Activated CD4-positive, alpha-beta memory T cell treated with anti-CD3 and anti-CD28 coated beads for 36 hours (primary cell): ENCODE measurements at regions of chr18 and their contacts with region 1.

Region 1: DNA sequence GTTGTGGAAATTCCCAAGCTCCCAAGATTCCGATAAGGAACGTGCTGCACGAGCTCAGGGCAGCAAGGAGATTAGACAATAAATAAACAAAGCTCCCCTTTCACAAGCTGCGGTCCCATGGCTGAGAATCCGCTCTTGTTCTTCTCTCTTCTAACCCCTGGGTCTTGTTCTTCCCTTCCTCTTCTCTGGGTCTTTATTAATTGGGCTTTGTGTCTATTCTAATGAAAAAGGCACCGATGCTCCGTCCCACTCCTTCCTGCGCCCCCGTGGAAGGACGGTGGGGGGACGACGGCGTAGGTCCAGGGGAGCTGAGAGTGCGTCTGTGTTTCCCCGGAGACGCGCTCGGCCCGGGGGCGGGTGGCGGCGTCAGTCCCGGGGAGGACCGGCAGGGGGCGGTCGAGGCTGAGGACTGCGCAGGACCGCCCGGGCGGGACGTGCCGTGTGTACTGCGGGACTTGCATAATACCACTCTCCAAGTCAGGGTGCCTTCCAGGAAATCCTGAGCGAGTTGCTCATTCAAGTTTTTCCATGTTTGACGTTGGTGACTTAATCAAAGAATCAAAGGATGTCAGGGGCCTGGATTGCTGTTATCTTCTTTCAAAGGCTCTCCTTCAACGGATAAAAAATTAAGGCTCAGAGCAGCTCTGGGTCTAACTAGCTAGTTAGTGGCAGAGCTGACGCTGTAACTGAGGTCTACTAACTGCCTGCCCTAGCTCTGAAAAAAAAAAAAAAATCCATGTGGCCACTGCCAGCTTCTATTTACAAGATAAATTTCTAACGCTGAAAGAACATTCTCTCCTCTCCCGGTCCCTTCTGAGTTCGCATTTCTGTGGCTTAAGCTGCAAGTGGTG is 321.4 kb downstream of the TGIF1 start:
- DNase-seq: peak; percentile 88
- H3K4me3 Mint-ChIP-seq: peak overlapping the region; percentile 47
- H3K27ac Mint-ChIP-seq: no peak overlapping the region
- H3K4me1 Mint-ChIP-seq: peaks cover 7% of the 10 kb centered on the region
- H3K27me3 Mint-ChIP-seq: peaks cover 21% of the 10 kb centered on the region

Region 2: DNA sequence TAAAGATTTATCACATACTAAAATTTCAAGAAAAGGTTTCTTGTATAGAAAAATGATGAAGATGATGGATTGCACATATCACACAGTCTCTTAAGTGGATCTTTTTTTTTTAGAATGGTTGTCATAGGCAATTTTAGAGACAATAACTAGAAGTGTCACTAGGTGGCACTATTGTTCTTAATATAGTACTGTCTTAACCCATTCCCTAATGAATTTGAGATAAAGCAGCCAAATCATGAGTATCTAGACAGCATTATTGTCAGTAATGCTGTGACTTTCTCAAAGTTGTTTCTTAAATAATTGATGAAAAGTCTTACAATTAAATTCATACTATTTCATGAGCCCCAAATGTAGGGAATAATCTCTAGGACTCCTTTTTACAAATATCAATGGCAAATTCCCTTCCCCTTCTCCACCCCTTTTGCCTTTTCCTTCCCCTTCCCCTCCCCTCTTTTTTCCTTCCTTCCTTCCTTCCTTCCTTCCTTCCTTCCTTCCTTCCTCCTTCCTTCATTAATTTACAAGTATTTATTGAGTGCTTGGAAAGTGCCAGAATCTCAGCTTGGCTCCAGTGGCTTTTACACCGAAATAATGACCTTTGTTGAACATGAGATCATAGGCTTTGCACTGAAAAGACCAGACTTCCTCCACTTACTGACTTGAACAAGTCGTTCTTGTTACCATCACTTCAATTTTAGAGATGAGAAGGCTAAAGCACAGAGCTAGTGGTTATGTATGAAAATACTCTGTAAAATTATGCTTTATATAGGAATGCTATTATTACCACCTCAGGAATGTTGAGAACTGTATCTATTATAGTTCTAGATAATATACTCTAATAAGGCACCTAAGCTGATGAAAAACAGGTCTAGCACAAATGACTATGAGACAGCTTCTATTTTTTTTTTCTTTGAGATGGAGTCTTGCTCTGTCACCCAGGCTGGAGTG is 489.6 kb before region 1 on chr18:
- CTCF ChIA-PET with region 1: interaction called, 5 read pairs
- POLR2A ChIA-PET with region 1: no interaction called
- intact Hi-C with region 1: loop called (anchors 5 kb)
- DNase-seq: no peak
- H3K4me3 Mint-ChIP-seq: no peak overlapping the region
- H3K27ac Mint-ChIP-seq: no peak overlapping the region
- H3K4me1 Mint-ChIP-seq: peaks cover 6% of the 10 kb centered on the region
- H3K27me3 Mint-ChIP-seq: no peaks in the 10 kb centered on the region

Region 3: DNA sequence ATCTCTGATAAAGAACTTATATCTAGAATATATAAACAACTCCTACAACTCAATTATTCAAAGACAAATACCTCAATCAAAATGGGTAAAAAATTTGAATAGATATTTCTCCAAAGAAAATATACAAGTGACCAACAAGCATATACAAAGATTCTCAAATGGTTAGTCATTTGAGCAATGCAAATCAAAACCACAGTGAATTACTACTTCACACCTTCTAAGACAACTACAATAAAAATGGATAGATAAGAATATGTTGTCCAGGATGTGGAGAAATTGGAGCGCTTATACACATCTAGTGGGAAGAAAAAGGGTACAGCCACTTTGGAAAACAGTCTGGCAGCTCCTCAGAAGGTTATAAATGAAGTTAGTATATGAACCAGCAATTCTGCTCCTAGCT is 11.6 kb after region 1 on chr18:
- CTCF ChIA-PET with region 1: interaction called, 10 read pairs
- POLR2A ChIA-PET with region 1: no interaction called
- intact Hi-C with region 1: no loop called
- DNase-seq: no peak
- H3K4me3 Mint-ChIP-seq: no peak overlapping the region
- H3K27ac Mint-ChIP-seq: no peak overlapping the region
- H3K4me1 Mint-ChIP-seq: no peaks in the 10 kb centered on the region
- H3K27me3 Mint-ChIP-seq: peaks cover 5% of the 10 kb centered on the region

Region 4: GRCh38 chr18:3869848-3870247 is 98.5 kb after region 1 on chr18:
- CTCF ChIA-PET with region 1: interaction called, 39 read pairs
- POLR2A ChIA-PET with region 1: no interaction called
- intact Hi-C with region 1: loop called (anchors 5 kb)
- DNase-seq: no peak
- H3K4me3 Mint-ChIP-seq: no peak overlapping the region
- H3K27ac Mint-ChIP-seq: no peak overlapping the region
- H3K4me1 Mint-ChIP-seq: no peaks in the 10 kb centered on the region
- H3K27me3 Mint-ChIP-seq: peaks cover 4% of the 10 kb centered on the region

Region 5: GRCh38 chr18:3995476-3996102 is 224.2 kb after region 1 on chr18:
- CTCF ChIA-PET with region 1: interaction called, 65 read pairs
- POLR2A ChIA-PET with region 1: no interaction called
- intact Hi-C with region 1: loop called (anchors 1 kb)
- DNase-seq: peak; percentile 61
- H3K4me3 Mint-ChIP-seq: no peak overlapping the region
- H3K27ac Mint-ChIP-seq: no peak overlapping the region
- H3K4me1 Mint-ChIP-seq: peaks cover 2% of the 10 kb centered on the region
- H3K27me3 Mint-ChIP-seq: peaks cover 4% of the 10 kb centered on the region

Region 6: DNA sequence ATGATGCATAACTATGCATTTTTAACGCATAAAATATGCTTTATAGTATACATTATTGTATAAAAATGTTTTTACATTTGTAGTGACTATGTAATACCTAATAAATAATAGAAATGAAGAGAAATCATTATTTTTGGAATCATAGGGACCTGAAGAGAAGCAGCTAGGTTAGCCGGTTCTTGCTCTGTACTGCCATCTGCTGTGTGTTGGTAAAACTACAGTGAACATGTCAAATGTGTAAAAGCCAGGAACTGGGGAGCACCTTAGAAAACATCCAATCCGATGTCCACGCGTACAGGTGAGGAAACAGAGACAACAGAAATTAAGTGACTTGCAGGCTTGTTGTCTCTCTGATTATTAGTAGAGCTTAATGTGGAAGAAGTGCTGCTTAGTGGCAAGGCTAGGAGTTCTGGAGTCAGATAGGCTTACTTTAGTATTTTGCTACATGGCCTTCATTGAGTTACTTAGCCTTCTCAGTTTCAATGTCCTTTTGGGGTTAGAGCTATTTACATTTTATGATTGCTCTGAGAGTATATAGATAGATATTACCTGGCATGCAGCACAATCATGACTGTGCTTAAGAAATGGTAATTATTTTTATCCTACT is 297.3 kb after region 1 on chr18:
- CTCF ChIA-PET with region 1: interaction called, 13 read pairs
- POLR2A ChIA-PET with region 1: no interaction called
- intact Hi-C with region 1: loop called (anchors 1 kb)
- DNase-seq: peak; percentile 17
- H3K4me3 Mint-ChIP-seq: no peak overlapping the region
- H3K27ac Mint-ChIP-seq: no peak overlapping the region
- H3K4me1 Mint-ChIP-seq: no peaks in the 10 kb centered on the region
- H3K27me3 Mint-ChIP-seq: peaks cover 6% of the 10 kb centered on the region

Region 7: DNA sequence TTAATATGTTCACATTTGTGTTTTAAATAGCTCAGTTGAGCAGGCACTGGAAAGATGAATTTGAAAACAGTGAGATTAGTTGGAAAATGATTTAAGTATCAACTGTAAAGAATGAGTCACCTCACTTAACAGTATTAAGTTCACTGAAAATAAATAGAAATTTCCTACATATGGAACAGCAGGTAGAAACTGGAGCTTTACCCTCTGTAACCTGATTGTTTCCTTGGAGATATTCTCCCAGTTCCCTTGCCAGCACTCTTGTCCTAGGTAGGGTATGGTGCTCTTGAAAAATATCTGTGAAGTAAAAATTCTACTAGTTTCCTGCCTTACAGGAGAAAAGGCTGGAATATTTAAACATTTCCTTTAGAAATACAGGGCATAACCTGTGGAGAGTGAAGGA is 765.1 kb after region 1 on chr18:
- CTCF ChIA-PET with region 1: no interaction called
- POLR2A ChIA-PET with region 1: no interaction called
- intact Hi-C with region 1: no loop called
- DNase-seq: no peak
- H3K4me3 Mint-ChIP-seq: no peak overlapping the region
- H3K27ac Mint-ChIP-seq: no peak overlapping the region
- H3K4me1 Mint-ChIP-seq: no peaks in the 10 kb centered on the region
- H3K27me3 Mint-ChIP-seq: no peaks in the 10 kb centered on the region

Region 8: GRCh38 chr18:5057386-5058348 is 1286.3 kb after region 1 on chr18:
- CTCF ChIA-PET with region 1: interaction called, 3 read pairs
- POLR2A ChIA-PET with region 1: no interaction called
- intact Hi-C with region 1: loop called (anchors 2 kb)
- DNase-seq: peak; percentile 60
- H3K4me3 Mint-ChIP-seq: no peak overlapping the region
- H3K27ac Mint-ChIP-seq: no peak overlapping the region
- H3K4me1 Mint-ChIP-seq: peaks cover 13% of the 10 kb centered on the region
- H3K27me3 Mint-ChIP-seq: no peaks in the 10 kb centered on the region